ENCODE measurements at regions of chr10 and their contacts with region 1.

Region 1: GRCh38 chr10:9091530-9092093 is 1037.1 kb downstream of the GATA3 start:
- DNase-seq: no peak
- H3K4me3 Mint-ChIP-seq: no peak overlapping the region
- H3K27ac Mint-ChIP-seq: no peak overlapping the region
- H3K4me1 Mint-ChIP-seq: peaks cover 12% of the 10 kb centered on the region
- H3K27me3 Mint-ChIP-seq: no peaks in the 10 kb centered on the region

Region 2: DNA sequence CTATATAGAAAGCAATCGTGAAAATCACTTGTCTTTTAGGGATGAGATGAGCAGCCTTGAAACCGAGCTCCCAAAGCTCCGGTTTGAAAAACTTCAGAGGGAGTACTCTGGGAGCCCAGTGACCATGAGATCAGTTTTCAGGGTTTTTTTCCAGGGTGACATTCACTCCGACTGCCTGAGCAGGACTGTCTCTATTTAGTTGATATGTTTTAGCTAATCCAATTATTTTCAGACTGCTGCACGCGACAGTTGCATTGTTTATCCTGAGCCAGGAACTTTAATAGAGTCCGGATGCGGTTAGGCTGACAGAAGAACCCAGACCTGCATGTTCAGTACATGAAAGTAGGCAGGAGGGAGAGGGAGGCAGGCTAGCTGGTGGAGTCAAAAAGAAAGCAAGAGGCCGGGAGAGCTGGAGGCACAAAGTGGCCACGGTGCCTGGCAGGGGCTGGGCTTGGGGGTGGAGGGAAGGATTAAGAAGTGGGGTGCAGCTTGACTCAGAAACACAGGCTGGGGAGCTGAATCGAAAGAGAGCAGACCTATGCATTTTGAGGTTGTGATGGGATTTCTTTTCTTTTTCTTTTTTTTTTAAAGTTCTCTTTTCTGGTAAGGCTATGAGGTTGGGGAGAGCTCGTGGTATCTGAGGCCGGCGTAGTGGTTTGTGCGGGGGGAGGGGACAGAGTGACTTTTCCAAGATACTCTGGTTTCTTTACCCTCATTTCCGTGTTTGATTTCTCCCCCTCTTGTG is 1031.5 kb before region 1 on chr10:
- intact Hi-C with region 1: no loop called
- DNase-seq: peak; percentile 92
- H3K4me3 Mint-ChIP-seq: peak overlapping the region; percentile 90
- H3K27ac Mint-ChIP-seq: peak overlapping the region; percentile 93
- H3K4me1 Mint-ChIP-seq: peaks cover 70% of the 10 kb centered on the region
- H3K27me3 Mint-ChIP-seq: peaks cover 2% of the 10 kb centered on the region

Region 3: GRCh38 chr10:8416192-8416701 is 675.4 kb before region 1 on chr10:
- intact Hi-C with region 1: loop called (anchors 1 kb)
- DNase-seq: peak; percentile 83
- H3K4me3 Mint-ChIP-seq: peak overlapping the region; percentile 38
- H3K27ac Mint-ChIP-seq: peak overlapping the region; percentile 90
- H3K4me1 Mint-ChIP-seq: peaks cover 29% of the 10 kb centered on the region
- H3K27me3 Mint-ChIP-seq: peaks cover 10% of the 10 kb centered on the region

Region 4: DNA sequence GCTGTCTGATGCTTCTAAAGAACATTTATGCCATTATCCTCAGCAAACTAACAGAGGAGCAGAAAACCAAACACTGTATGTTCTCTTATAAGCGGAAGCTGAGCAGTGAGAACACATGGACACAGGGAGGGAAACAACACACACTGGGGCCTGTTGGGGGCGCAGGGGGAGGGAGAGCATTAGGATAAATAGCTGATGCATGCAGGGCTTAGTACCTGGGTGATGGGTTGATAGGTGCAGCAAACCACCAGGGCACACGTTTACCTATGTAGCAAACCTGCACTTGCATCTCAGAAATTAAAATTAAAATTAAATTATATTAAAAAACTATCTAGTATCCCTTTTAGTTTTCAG is 183.6 kb before region 1 on chr10:
- intact Hi-C with region 1: no loop called
- DNase-seq: no peak
- H3K4me3 Mint-ChIP-seq: no peak overlapping the region
- H3K27ac Mint-ChIP-seq: no peak overlapping the region
- H3K4me1 Mint-ChIP-seq: no peaks in the 10 kb centered on the region
- H3K27me3 Mint-ChIP-seq: no peaks in the 10 kb centered on the region

Region 5: GRCh38 chr10:8967061-8967460 is 124.6 kb before region 1 on chr10:
- intact Hi-C with region 1: no loop called
- DNase-seq: no peak
- H3K4me3 Mint-ChIP-seq: no peak overlapping the region
- H3K27ac Mint-ChIP-seq: no peak overlapping the region
- H3K4me1 Mint-ChIP-seq: no peaks in the 10 kb centered on the region
- H3K27me3 Mint-ChIP-seq: no peaks in the 10 kb centered on the region

Region 6: DNA sequence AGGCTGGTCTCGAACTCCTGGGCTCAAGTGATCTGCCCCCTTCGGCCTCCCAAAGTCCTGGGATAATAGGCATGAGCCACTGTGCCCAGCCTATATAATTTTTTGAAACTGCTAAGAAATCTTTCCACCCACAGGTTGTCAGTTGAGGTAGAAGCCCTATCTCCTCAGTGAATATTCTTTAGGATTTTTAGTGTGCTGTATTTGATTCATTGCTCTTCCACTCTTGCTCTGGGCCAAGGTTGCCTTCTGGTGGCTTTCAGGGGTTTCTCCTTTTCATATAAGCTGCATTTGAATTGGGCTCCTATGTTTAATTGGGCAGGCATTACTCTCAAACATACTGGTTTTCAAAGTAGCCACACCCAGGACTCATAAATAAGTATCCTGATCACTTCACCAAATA is 106.0 kb before region 1 on chr10:
- intact Hi-C with region 1: loop called (anchors 1 kb)
- DNase-seq: no peak
- H3K4me3 Mint-ChIP-seq: no peak overlapping the region
- H3K27ac Mint-ChIP-seq: no peak overlapping the region
- H3K4me1 Mint-ChIP-seq: peaks cover 5% of the 10 kb centered on the region
- H3K27me3 Mint-ChIP-seq: no peaks in the 10 kb centered on the region

Region 7: GRCh38 chr10:9024210-9024609 is 67.4 kb before region 1 on chr10:
- intact Hi-C with region 1: loop called (anchors 2 kb)
- DNase-seq: no peak
- H3K4me3 Mint-ChIP-seq: no peak overlapping the region
- H3K27ac Mint-ChIP-seq: peak overlapping the region; percentile 85
- H3K4me1 Mint-ChIP-seq: peaks cover 11% of the 10 kb centered on the region
- H3K27me3 Mint-ChIP-seq: peaks cover 9% of the 10 kb centered on the region

Region 8: DNA sequence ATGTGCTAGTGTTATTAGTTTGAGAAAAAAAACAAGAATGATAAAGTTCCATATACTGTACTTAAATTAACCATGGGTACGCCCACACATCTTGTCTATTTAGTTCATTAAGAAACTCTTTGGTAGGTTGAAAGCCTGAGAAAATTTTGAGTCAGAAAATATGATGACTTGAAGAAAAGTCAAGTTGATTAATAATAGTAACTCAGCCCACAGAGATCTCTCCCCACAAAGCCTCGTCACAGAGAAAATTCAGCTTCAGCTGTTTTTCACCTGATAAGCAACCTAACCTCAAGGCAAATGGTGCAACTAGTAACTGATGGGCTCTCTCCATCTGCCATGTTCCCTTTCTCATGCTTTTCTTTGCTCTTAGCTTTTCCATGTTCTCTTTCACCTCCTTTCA is 15.5 kb before region 1 on chr10:
- intact Hi-C with region 1: loop called (anchors 2 kb)
- DNase-seq: no peak
- H3K4me3 Mint-ChIP-seq: no peak overlapping the region
- H3K27ac Mint-ChIP-seq: no peak overlapping the region
- H3K4me1 Mint-ChIP-seq: no peaks in the 10 kb centered on the region
- H3K27me3 Mint-ChIP-seq: no peaks in the 10 kb centered on the region

Region 9: DNA sequence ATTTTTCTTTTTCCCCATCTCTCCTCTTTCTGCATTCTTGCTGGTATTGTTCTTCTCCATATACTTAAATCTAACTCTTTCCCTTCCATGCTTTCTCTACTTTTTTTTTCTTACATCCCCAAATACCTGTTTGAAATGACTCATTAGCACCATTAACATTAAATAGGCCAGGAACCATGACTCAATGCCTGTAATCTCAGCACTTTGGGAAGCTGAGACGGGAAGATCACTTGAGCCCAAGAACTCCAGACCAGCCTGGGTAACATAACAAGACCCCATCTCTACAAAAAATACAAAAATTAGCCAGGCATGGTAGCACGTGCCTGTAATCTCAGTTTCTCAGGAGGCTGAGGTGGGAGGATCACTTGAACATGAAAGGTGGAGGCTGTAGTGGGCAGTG is 10.4 kb before region 1 on chr10:
- intact Hi-C with region 1: loop called (anchors 1 kb)
- DNase-seq: no peak
- H3K4me3 Mint-ChIP-seq: no peak overlapping the region
- H3K27ac Mint-ChIP-seq: no peak overlapping the region
- H3K4me1 Mint-ChIP-seq: peaks cover 4% of the 10 kb centered on the region
- H3K27me3 Mint-ChIP-seq: peaks cover 7% of the 10 kb centered on the region

Region 10: GRCh38 chr10:9175200-9175599 is 83.6 kb after region 1 on chr10:
- intact Hi-C with region 1: no loop called
- DNase-seq: peak; percentile 58
- H3K4me3 Mint-ChIP-seq: no peak overlapping the region
- H3K27ac Mint-ChIP-seq: no peak overlapping the region
- H3K4me1 Mint-ChIP-seq: peaks cover 11% of the 10 kb centered on the region
- H3K27me3 Mint-ChIP-seq: peaks cover 10% of the 10 kb centered on the region